GM12878 (cell line): ENCODE measurements at regions of chr3 and their contacts with region 1.

Region 1: DNA sequence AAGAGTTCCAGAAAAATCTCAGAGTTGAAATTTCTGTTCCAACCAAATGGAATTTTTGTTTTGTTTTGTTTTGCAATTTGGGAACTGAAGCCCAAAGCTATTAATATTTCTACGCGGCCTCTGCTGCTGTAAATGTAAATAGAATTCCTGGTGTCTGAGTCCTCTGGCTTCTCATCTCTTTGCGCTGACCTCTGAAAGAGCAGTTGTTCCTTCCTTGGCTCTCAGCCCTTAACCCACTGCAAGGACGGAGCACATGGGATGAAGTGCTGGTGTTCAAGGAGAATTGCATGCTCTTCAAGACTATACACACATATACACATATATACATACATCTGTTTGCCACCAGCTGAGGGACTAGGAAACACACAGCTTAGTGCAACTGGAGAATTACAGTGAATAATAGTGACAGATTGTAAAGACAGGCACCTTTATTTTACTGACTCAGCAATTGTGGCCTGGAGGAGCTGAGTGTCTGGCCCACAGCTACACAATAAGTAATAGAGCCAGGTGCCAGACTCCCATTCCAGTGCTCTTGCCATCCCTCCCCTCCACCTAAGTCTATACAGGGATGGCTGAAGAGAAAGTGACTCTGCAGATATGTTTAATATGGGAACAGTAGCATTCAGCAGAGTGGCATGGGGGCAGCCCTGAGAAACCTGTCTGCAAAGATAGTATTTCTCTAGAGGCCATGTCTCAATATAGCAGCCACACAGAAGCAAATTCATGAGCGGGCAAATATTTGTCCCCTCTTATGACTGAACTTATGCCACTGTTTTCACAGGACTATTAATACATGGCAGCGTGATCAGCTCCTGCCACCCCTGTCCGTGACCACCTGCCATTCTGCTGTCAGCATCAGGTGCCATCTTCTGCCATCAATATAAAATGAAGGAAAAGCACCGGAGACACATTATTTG is 42.3 kb downstream of the NEK10 start:
- DNase-seq: no peak
- ATAC-seq: no peak
- H3K4me3 ChIP-seq: no peak overlapping the region
- H3K27ac ChIP-seq: no peak overlapping the region
- H3K4me1 ChIP-seq: no peaks in the 10 kb centered on the region
- H3K27me3 ChIP-seq: no peaks in the 10 kb centered on the region
- CTCF ChIP-seq: no peak
- EP300 ChIP-seq: no peak
- POLR2A ChIP-seq: no peak
- RAD21 ChIP-seq: no peak

Region 2: DNA sequence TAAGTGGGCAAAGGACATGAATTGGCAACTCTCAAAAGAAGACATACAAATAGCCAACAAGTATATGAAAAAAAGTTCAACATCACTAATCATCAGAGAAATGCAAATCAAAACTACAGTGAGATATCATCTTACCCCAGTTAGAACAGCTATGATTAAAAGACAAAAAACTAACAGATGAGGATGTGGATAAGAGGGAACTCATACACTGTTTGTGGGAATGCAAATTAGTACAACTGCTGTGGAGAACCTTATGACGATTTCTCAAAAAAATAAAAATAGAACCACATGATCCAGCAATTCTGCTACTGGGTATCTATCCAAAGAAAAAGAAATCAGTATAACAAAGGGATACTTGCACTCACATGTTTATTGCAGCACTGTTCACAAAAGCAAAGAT is 13.6 kb after region 1 on chr3:
- CTCF ChIA-PET with region 1: interaction called, 6 read pairs
- POLR2A ChIA-PET with region 1: no interaction called
- RAD21 ChIA-PET with region 1: no interaction called
- SMC1A ChIA-PET with region 1: interaction called, 4 read pairs
- in situ Hi-C with region 1: no loop called
- intact Hi-C with region 1: loop called (anchors 2 kb)
- DNase-seq: no peak
- ATAC-seq: peak; percentile 69
- H3K4me3 ChIP-seq: no peak overlapping the region
- H3K27ac ChIP-seq: no peak overlapping the region
- H3K4me1 ChIP-seq: no peaks in the 10 kb centered on the region
- H3K27me3 ChIP-seq: no peaks in the 10 kb centered on the region
- CTCF ChIP-seq: no peak
- EP300 ChIP-seq: no peak; a peak in 1 of 4 replicates
- POLR2A ChIP-seq: no peak
- RAD21 ChIP-seq: no peak

Region 3: GRCh38 chr3:27349832-27350231 is 22.9 kb after region 1 on chr3:
- CTCF ChIA-PET with region 1: interaction called, 6 read pairs
- POLR2A ChIA-PET with region 1: no interaction called
- RAD21 ChIA-PET with region 1: interaction called, 3 read pairs
- SMC1A ChIA-PET with region 1: interaction called, 11 read pairs
- in situ Hi-C with region 1: no loop called
- intact Hi-C with region 1: no loop called
- DNase-seq: peak; percentile 56
- ATAC-seq: peak; percentile 85
- H3K4me3 ChIP-seq: no peak overlapping the region
- H3K27ac ChIP-seq: peak overlapping the region; percentile 73
- H3K4me1 ChIP-seq: peaks cover 10% of the 10 kb centered on the region
- H3K27me3 ChIP-seq: no peaks in the 10 kb centered on the region
- CTCF ChIP-seq: no peak
- EP300 ChIP-seq: no peak
- POLR2A ChIP-seq: no peak
- RAD21 ChIP-seq: no peak

Region 4: GRCh38 chr3:27366062-27366591 is 39.2 kb after region 1 on chr3:
- CTCF ChIA-PET with region 1: no interaction called
- POLR2A ChIA-PET with region 1: no interaction called
- RAD21 ChIA-PET with region 1: no interaction called
- SMC1A ChIA-PET with region 1: no interaction called
- in situ Hi-C with region 1: no loop called
- intact Hi-C with region 1: no loop called
- DNase-seq: no peak
- ATAC-seq: no peak
- H3K4me3 ChIP-seq: no peak overlapping the region
- H3K27ac ChIP-seq: no peak overlapping the region
- H3K4me1 ChIP-seq: no peaks in the 10 kb centered on the region
- H3K27me3 ChIP-seq: no peaks in the 10 kb centered on the region
- CTCF ChIP-seq: no peak
- EP300 ChIP-seq: no peak
- POLR2A ChIP-seq: no peak
- RAD21 ChIP-seq: no peak